ENCODE measurements at regions of chr6 and their contacts with region 1.

Region 1: DNA sequence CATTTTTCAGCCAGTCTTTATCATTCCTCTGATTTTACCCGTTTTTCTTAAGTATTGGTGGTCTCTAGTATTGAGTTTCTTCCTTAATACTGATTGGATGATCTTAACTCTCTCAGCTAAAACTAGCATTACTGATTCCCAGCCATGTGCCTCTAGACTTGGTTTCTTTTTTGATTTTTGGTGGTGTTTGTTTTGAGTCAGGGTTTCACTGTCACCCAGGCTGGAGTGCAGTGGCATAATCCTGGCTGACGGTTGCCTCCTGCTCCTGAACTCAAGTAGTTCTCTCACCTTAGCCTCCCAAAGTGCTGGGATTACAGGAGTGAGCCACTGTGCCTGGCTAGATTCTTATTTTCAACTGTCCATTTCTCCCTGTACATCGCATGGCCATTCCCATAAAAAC is 24.9 kb downstream of the DPPA5 start:
- DNase-seq: no peak
- H3K4me3 ChIP-seq: no peak overlapping the region
- H3K27ac ChIP-seq: no peak overlapping the region
- H3K4me1 ChIP-seq: peaks cover 5% of the 10 kb centered on the region
- CTCF ChIP-seq: no peak

Region 2: DNA sequence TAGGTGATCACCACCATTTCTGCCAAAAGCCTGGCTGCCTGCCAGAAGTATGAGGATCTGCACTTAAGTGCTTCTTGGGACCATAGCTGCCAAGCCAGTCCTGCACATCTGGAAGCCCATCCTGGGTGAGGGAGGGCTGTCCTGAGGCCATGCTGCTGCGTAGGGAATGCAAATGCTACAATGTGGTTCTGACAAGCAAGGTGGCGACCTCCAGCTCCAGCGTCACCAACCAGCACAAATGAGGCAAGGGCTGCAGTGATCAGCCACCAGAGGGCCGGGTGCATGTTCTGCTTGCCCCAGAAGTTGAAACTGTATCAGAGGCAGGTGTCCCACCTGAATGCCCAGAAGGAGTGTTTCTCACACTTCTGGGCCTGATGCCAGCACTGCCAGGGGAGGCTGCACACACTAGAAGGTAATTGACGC is 806.5 kb before region 1 on chr6:
- CTCF ChIA-PET with region 1: no interaction called
- POLR2A ChIA-PET with region 1: interaction called, 3 read pairs
- intact Hi-C with region 1: loop called (anchors 5 kb)
- DNase-seq: peak; percentile 42
- H3K4me3 ChIP-seq: no peak overlapping the region
- H3K27ac ChIP-seq: no peak overlapping the region
- H3K4me1 ChIP-seq: no peaks in the 10 kb centered on the region
- CTCF ChIP-seq: peak; percentile 69

Region 3: DNA sequence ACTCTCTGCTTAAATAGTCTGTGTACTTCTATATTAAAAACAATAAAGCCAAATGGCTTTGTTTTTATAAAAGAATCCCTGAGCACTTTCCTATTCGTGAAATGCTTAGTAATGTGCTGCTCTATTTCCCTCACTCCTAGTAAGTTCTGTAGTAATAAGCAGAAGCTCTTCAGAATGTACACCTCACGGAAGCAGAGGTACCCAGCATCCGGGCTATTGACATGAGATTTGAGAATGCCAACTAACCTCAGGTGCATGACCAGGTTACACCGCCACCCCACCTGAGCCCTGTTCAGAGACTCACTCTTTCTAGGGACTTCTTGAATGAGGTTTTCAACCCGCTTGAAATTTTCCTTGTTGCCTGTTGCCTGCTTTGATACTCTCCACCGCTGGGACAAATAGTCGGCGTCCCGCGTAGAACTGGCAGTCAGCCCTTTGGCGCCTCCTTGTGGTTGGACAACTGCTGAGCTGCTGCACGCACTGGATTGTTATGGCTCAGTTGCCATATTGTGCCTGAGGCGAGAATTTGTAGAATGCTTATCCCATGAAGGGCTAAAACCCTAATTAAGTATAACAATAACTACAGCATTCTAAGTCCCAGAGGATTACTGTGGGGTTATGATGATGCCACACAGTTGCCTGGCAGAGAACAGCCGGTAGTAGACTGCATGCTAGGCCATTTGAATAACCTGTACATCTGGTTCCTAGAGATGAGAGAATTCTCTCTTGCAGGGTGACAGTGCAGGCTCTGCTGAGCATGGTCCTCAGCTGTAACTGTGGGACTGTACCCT is 199.4 kb before region 1 on chr6:
- CTCF ChIA-PET with region 1: no interaction called
- POLR2A ChIA-PET with region 1: no interaction called
- intact Hi-C with region 1: loop called (anchors 2 kb)
- DNase-seq: peak; percentile 44
- H3K4me3 ChIP-seq: no peak overlapping the region
- H3K27ac ChIP-seq: no peak overlapping the region
- H3K4me1 ChIP-seq: no peaks in the 10 kb centered on the region
- CTCF ChIP-seq: peak; percentile 92

Region 4: GRCh38 chr6:73180763-73181619 is 148.2 kb before region 1 on chr6:
- CTCF ChIA-PET with region 1: no interaction called
- POLR2A ChIA-PET with region 1: no interaction called
- intact Hi-C with region 1: loop called (anchors 1 kb)
- DNase-seq: peak; percentile 81
- H3K4me3 ChIP-seq: peak overlapping the region; percentile 48
- H3K27ac ChIP-seq: peak overlapping the region; percentile 46
- H3K4me1 ChIP-seq: peaks cover 54% of the 10 kb centered on the region
- CTCF ChIP-seq: peak; percentile 97

Region 5: DNA sequence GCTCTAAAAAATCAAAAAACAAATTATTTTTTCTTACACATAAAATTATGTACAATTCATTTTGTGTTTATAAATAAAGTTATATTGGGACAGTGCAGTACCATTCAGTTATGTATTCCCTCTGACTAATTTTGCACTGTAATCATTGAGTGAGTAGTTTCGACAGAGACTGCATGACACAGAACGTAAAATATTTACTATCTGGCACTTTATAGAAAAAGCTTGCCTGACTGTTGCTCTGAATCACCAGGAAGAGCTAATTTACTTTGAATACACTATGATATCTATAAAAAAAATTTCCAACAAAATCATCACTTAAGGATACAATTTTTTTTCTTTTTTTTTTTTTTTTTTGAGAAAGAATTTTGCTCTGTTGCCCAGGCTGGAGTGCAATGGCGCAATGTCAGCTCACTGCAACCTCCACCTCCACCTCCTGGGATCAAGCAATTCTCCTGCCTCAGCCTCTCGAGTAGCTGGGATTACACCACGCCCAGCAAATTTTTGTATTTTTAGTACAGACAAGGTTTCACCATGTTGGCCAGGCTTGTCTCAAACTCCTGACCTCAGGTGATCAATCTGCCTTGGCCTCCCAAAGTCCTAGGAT is 93.0 kb before region 1 on chr6:
- CTCF ChIA-PET with region 1: no interaction called
- POLR2A ChIA-PET with region 1: no interaction called
- intact Hi-C with region 1: no loop called
- DNase-seq: no peak
- H3K4me3 ChIP-seq: no peak overlapping the region
- H3K27ac ChIP-seq: no peak overlapping the region
- H3K4me1 ChIP-seq: no peaks in the 10 kb centered on the region
- CTCF ChIP-seq: no peak

Region 6: DNA sequence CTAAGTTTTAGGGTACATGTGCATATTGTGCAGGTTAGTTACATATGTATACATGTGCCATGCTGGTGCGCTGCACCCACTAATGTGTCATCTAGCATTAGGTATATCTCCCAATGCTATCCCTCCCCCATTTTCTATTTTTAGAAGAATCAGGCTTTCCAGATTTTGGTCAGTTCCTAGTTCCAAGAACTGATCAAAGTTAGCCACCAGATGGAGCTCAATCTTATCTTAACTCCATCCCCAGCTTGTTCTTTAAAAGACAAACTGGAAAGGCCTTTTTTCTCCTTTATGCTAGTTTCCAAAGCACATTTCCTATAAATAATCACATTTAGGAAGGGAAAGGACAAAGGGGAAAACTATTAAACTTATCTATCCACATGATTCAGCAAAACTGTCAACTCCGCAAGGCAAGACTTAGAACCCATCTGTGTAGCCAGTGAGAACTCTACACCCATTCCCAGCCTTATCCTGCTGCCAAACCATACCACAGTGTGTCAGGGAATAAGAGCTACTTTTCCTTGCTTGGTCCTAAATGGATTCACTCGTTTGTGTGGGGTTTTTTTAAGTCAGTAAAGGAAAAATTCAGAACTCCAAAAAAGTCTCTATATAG is 43.4 kb before region 1 on chr6:
- CTCF ChIA-PET with region 1: no interaction called
- POLR2A ChIA-PET with region 1: interaction called, 7 read pairs
- intact Hi-C with region 1: loop called (anchors 1 kb)
- DNase-seq: peak; percentile 37
- H3K4me3 ChIP-seq: no peak overlapping the region
- H3K27ac ChIP-seq: no peak overlapping the region
- H3K4me1 ChIP-seq: no peaks in the 10 kb centered on the region
- CTCF ChIP-seq: peak; percentile 64

Region 7: GRCh38 chr6:73732845-73733675 is 403.9 kb after region 1 on chr6:
- CTCF ChIA-PET with region 1: no interaction called
- POLR2A ChIA-PET with region 1: no interaction called
- intact Hi-C with region 1: no loop called
- DNase-seq: peak; percentile 70
- H3K4me3 ChIP-seq: no peak overlapping the region
- H3K27ac ChIP-seq: no peak overlapping the region
- H3K4me1 ChIP-seq: no peaks in the 10 kb centered on the region
- CTCF ChIP-seq: peak; percentile 94

Region 8: GRCh38 chr6:73790574-73790973 is 461.4 kb after region 1 on chr6:
- CTCF ChIA-PET with region 1: no interaction called
- POLR2A ChIA-PET with region 1: no interaction called
- intact Hi-C with region 1: no loop called
- DNase-seq: no peak
- H3K4me3 ChIP-seq: no peak overlapping the region
- H3K27ac ChIP-seq: no peak overlapping the region
- H3K4me1 ChIP-seq: no peaks in the 10 kb centered on the region
- CTCF ChIP-seq: no peak

Region 9: GRCh38 chr6:74041420-74041819 is 712.2 kb after region 1 on chr6:
- CTCF ChIA-PET with region 1: no interaction called
- POLR2A ChIA-PET with region 1: no interaction called
- intact Hi-C with region 1: no loop called
- DNase-seq: no peak
- H3K4me3 ChIP-seq: no peak overlapping the region
- H3K27ac ChIP-seq: no peak overlapping the region
- H3K4me1 ChIP-seq: no peaks in the 10 kb centered on the region
- CTCF ChIP-seq: no peak

Measured in OCI-LY7 (cell line).